Gastrocnemius medialis (tissue), 4 donors: ENCODE measurements at regions of chr4 and their contacts with region 1.

Region 1: DNA sequence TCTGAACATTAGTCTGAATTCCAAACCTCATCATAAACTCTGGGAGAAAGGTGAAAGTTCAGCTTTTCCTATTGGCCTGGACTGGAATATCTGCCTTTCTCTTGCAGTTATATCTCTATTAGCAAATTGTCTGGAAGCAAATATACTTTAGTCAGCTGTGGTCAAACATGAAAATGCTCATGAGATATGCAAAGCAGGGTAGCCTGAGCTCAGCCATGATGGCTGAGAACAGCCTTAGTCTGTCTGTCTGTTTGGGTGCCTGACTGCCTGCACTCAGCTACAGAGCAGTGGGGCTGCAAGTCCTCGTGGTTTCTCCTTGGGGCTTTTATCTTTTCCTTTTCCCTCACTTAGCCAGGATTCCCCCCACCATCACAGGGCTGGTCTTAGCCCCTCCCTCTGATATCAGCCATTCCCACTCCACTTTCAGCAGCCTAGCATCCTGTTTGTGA is 19.5 kb upstream of the PGRMC2 start:
- DNase-seq: no peak
- ATAC-seq: no peak
- H3K4me3 ChIP-seq: no peak overlapping the region
- H3K27ac ChIP-seq: no peak overlapping the region
- H3K4me1 ChIP-seq: peaks cover 9% of the 10 kb centered on the region in 2 donors
- H3K27me3 ChIP-seq: no peaks in the 10 kb centered on the region
- CTCF ChIP-seq: no peak
- POLR2A ChIP-seq: no peak

Region 2: DNA sequence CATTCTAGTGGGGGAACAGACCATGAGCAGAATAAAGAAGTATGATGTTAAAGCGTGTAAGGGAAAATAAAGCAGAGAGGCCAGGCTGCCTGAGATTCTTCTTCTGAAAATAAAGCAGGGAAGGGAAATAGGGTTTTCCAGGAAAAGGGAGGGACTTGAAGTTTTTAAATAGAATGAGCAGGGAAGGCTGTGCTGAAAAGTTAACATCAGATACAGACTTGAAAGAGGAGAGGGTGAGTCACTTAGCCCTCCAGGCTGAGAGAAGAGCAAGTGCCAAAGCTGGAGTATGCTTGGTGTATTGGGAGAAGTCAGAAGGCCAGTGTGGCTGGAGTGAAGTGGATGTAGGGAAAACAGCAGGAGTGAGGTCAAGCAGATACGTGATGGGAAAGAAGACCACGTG is 436.5 kb before region 1 on chr4:
- in situ Hi-C with region 1: no loop called
- intact Hi-C with region 1: no loop called
- DNase-seq: no peak
- ATAC-seq: no peak
- H3K4me3 ChIP-seq: no peak overlapping the region
- H3K27ac ChIP-seq: no peak overlapping the region
- H3K4me1 ChIP-seq: no peaks in the 10 kb centered on the region
- H3K27me3 ChIP-seq: no peaks in the 10 kb centered on the region
- CTCF ChIP-seq: no peak
- POLR2A ChIP-seq: no peak

Region 3: DNA sequence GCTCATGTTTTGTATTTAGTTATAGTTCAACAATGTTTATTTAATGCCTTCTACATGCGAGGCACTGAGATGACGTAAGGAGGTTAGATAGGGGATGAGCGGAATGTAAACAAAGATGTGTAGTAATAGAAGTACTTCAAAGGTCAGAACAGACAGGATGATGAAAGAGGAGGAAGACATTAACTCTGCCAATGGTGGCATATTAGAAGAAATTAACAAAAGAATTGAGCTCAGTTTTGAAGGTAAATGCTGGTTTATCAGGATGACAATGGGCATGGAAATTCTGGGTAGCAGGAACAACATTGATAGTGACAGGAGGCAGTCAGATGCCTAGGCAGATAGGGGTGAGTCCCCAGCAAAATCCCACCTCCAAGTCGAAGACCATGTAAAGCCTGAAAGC is 42.8 kb after region 1 on chr4:
- in situ Hi-C with region 1: no loop called
- intact Hi-C with region 1: loop called (anchors 5 kb)
- DNase-seq: no peak
- ATAC-seq: no peak
- H3K4me3 ChIP-seq: no peak overlapping the region
- H3K27ac ChIP-seq: no peak overlapping the region
- H3K4me1 ChIP-seq: peaks cover 13% of the 10 kb centered on the region in 2 donors
- H3K27me3 ChIP-seq: no peaks in the 10 kb centered on the region
- CTCF ChIP-seq: no peak
- POLR2A ChIP-seq: no peak